CD8-positive, alpha-beta T cell (primary cell): ENCODE measurements at regions of chr11 and their contacts with region 1.

Region 1: DNA sequence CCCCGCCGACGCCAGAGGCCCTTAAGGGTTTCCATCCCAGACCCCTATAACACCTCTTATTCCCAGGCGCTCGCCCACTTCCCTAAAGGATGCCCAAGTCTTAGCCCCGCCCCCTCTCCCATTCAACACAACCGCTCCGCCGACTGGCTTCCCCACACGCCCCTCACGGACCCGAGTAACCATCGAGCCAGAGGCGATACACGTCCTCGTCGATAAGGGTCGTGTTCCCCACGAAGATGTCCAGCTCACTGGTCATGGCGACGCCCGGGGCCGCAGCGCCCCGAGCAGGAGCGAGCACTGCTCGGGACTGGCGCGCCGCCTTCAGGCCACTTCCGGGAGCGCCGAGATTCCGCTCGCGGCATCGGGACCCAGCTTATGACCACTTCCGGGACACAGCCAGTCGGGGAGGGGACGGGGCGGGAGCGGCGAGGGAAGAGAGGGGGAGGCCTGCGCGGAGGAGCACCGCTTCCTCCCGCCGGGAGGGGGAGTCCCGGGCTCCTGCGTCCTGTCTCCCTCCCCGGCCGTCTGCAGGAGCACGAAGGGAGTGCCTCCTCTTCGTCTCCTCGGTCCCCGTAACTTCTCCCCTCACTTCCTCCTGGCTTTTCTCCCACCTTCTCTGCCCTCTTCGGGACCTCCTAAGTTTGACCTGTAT is at the start of gene FIBP:
- DNase-seq: peak; percentile 89 to 98 (median 95)
- ATAC-seq: peak; percentile 57
- H3K4me3 ChIP-seq: peak within 1 kb of the TSS; percentile 57 to 87
- H3K4me3 Mint-ChIP-seq: peak within 1 kb of the TSS; percentile 83
- H3K27ac ChIP-seq: peak within 1 kb of the TSS; percentile 73 to 97
- H3K27ac Mint-ChIP-seq: peak within 1 kb of the TSS; percentile 98
- H3K4me1 ChIP-seq: peaks cover 48% of the 10 kb centered on the region
- H3K4me1 Mint-ChIP-seq: peaks cover 62% of the 10 kb centered on the region
- H3K27me3 ChIP-seq: no peaks in the 10 kb centered on the region
- H3K27me3 Mint-ChIP-seq: no peaks in the 10 kb centered on the region
- CTCF ChIP-seq: peak; percentile 71
- total RNA-seq, gene FIBP: 16.5 to 19.3 TPM

Region 2: GRCh38 chr11:65779851-65780577 is 108.3 kb before region 1 on chr11:
- CTCF ChIA-PET with region 1: interaction called, 33 read pairs
- POLR2A ChIA-PET with region 1: interaction called, 4 read pairs
- intact Hi-C with region 1: loop called in 1 of 2 experiments (anchors 1 kb)
- DNase-seq: peak; percentile 46 to 88 (median 76)
- ATAC-seq: peak; percentile 74
- H3K4me3 ChIP-seq: peak overlapping the region; percentile 85
- H3K4me3 Mint-ChIP-seq: peak overlapping the region; percentile 86
- H3K27ac ChIP-seq: peak overlapping the region; percentile 31 to 52
- H3K27ac Mint-ChIP-seq: peak overlapping the region; percentile 77
- H3K4me1 ChIP-seq: peaks cover 17% of the 10 kb centered on the region
- H3K4me1 Mint-ChIP-seq: peaks cover 8% of the 10 kb centered on the region
- H3K27me3 ChIP-seq: no peaks in the 10 kb centered on the region
- H3K27me3 Mint-ChIP-seq: peaks cover under 1% of the 10 kb centered on the region
- CTCF ChIP-seq: peak; percentile 97

Region 3: DNA sequence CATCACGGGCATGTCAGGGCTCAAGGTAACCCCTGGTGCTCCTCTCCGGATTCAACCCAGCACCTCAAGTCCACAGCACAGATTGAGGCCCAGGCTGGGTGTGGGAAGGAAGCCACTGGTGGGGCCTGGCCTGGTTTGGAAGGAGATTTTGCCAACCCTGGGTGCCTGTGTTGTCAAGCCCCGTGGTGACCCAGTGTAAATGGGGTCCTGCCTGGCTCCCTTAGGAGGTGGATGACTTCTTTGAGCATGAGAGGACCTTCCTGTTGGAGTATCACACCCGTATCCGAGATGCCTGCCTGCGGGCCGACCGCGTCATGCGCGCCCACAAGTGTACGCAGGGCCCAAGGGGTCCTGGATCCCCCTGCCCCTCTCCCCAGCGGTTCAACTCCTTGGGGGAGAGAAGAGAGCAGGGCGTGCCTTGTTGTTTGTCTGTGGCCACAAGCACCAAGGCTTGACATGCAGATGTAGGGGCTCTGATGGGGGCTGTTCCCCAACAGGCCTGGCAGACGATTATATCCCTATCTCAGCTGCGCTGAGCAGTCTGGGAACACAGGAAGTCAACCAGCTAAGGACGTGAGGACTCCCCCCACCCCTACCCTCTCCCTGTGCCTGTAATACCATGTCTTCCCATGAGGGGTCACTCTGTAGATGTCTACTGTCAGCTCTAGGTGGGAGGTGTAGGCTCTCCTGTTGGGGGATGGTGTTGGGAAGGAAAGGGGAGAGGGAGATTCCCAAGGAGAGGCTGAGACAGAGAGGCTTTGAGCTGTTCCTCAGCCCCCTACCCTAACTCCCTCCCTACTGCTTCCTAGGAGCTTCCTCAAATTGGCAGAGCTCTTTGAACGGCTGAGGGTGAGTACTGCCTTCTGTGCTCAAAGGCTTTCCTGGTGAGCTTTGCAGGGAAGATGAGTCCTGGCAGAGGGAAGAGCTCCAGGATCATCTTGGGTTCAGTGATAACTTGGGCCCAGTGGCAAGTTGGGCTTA is 37.2 kb before region 1 on chr11:
- CTCF ChIA-PET with region 1: interaction called, 26 read pairs
- POLR2A ChIA-PET with region 1: interaction called, 178 read pairs
- intact Hi-C with region 1: no loop called
- DNase-seq: peak in 3 of 9 experiments; percentile 20 to 48 (median 37)
- ATAC-seq: no peak
- H3K4me3 ChIP-seq: no peak overlapping the region
- H3K4me3 Mint-ChIP-seq: no peak overlapping the region
- H3K27ac ChIP-seq: no peak overlapping the region
- H3K27ac Mint-ChIP-seq: no peak overlapping the region
- H3K4me1 ChIP-seq: peaks cover 32% of the 10 kb centered on the region
- H3K4me1 Mint-ChIP-seq: peaks cover 29% of the 10 kb centered on the region
- H3K27me3 ChIP-seq: no peaks in the 10 kb centered on the region
- H3K27me3 Mint-ChIP-seq: no peaks in the 10 kb centered on the region
- CTCF ChIP-seq: no peak

Region 4: GRCh38 chr11:65900125-65900898 is 12.0 kb after region 1 on chr11 and contains the start of gene FOSL1:
- CTCF ChIA-PET with region 1: interaction called, 71 read pairs
- POLR2A ChIA-PET with region 1: interaction called, 48 read pairs
- intact Hi-C with region 1: loop called (anchors 1 kb)
- DNase-seq: peak; percentile 82 to 97 (median 91)
- ATAC-seq: peak; percentile 93
- H3K4me3 ChIP-seq: peak within 1 kb of the TSS; percentile 36 to 49
- H3K4me3 Mint-ChIP-seq: peak within 1 kb of the TSS; percentile 73
- H3K27ac ChIP-seq: peak within 1 kb of the TSS; percentile 0 to 32
- H3K27ac Mint-ChIP-seq: peak within 1 kb of the TSS; percentile 69
- H3K4me1 ChIP-seq: peaks cover 20% of the 10 kb centered on the region
- H3K4me1 Mint-ChIP-seq: peaks cover 8% of the 10 kb centered on the region
- H3K27me3 ChIP-seq: peaks cover 0 to 4% of the 10 kb centered on the region in 2 experiments
- H3K27me3 Mint-ChIP-seq: no peaks in the 10 kb centered on the region
- CTCF ChIP-seq: no peak
- total RNA-seq, gene FOSL1: 2.0 to 4.0 TPM

Region 5: DNA sequence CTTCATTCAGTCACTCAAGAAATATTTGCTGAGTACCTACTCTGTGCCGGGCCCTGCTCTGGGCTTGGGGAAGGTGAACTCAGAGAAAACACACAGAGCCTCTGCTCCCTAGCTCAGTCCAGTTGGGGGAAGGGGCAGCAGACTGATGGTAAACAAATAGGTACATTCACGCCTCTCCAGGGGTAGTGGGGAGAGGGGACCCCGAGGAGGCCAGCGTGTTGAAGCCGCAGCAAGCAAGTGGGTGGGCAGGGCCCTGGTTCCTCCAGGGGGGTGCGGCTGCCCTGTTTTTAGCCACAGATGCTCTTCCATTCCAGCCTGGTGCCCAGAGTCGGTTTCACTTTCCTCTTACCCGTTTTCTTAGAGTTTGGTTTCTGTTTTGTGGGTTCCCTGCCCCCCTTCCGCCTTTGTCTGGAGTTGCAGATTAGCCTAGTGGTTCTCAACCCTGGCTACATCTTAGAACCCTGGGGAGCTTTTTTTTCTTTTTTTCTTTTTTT is 39.7 kb after region 1 on chr11:
- CTCF ChIA-PET with region 1: interaction called, 136 read pairs
- POLR2A ChIA-PET with region 1: interaction called, 19 read pairs
- intact Hi-C with region 1: loop called (anchors 1 to 2 kb)
- DNase-seq: peak; percentile 63 to 94 (median 83)
- ATAC-seq: peak; percentile 95
- H3K4me3 ChIP-seq: peak overlapping the region; percentile 42
- H3K4me3 Mint-ChIP-seq: peak overlapping the region; percentile 74
- H3K27ac ChIP-seq: peak overlapping the region; percentile 62 to 88
- H3K27ac Mint-ChIP-seq: peak overlapping the region; percentile 91
- H3K4me1 ChIP-seq: peaks cover 41% of the 10 kb centered on the region
- H3K4me1 Mint-ChIP-seq: peaks cover 39% of the 10 kb centered on the region
- H3K27me3 ChIP-seq: no peaks in the 10 kb centered on the region
- H3K27me3 Mint-ChIP-seq: no peaks in the 10 kb centered on the region
- CTCF ChIP-seq: no peak

Region 6: GRCh38 chr11:65988791-65989592 is 100.7 kb after region 1 on chr11:
- CTCF ChIA-PET with region 1: interaction called, 253 read pairs
- POLR2A ChIA-PET with region 1: interaction called, 3 read pairs
- intact Hi-C with region 1: loop called (anchors 1 kb)
- DNase-seq: peak; percentile 84 to 96 (median 91)
- ATAC-seq: peak; percentile 98
- H3K4me3 ChIP-seq: no peak overlapping the region
- H3K4me3 Mint-ChIP-seq: no peak overlapping the region
- H3K27ac ChIP-seq: peak overlapping the region in 1 of 2 experiments; percentile 20
- H3K27ac Mint-ChIP-seq: peak overlapping the region; percentile 6
- H3K4me1 ChIP-seq: no peaks in the 10 kb centered on the region
- H3K4me1 Mint-ChIP-seq: peaks cover 5% of the 10 kb centered on the region
- H3K27me3 ChIP-seq: no peaks in the 10 kb centered on the region
- H3K27me3 Mint-ChIP-seq: no peaks in the 10 kb centered on the region
- CTCF ChIP-seq: peak; percentile 98

Region 7: GRCh38 chr11:67303132-67303834 is 1415.0 kb after region 1 on chr11 and contains the start of gene SSH3:
- CTCF ChIA-PET with region 1: no interaction called
- POLR2A ChIA-PET with region 1: no interaction called
- intact Hi-C with region 1: no loop called
- DNase-seq: peak in 8 of 9 experiments; percentile 19 to 72 (median 48)
- ATAC-seq: peak; percentile 72
- H3K4me3 ChIP-seq: peak within 1 kb of the TSS; percentile 61 to 63
- H3K4me3 Mint-ChIP-seq: peak within 1 kb of the TSS; percentile 72
- H3K27ac ChIP-seq: peak within 1 kb of the TSS; percentile 32 to 37
- H3K27ac Mint-ChIP-seq: peak within 1 kb of the TSS; percentile 72
- H3K4me1 ChIP-seq: peaks cover 20% of the 10 kb centered on the region
- H3K4me1 Mint-ChIP-seq: peaks cover 16% of the 10 kb centered on the region
- H3K27me3 ChIP-seq: no peaks in the 10 kb centered on the region
- H3K27me3 Mint-ChIP-seq: no peaks in the 10 kb centered on the region
- CTCF ChIP-seq: no peak
- total RNA-seq, gene SSH3: 5.9 to 9.9 TPM